AG04450 (cell line): ENCODE measurements at regions of chr11 and their contacts with region 1.

Region 1: GRCh38 chr11:101456812-101457211 is 127.0 kb downstream of the TRPC6 start:
- DNase-seq: no peak
- H3K4me3 ChIP-seq: no peak overlapping the region
- H3K27ac ChIP-seq: no peak overlapping the region
- H3K27me3 ChIP-seq: no peaks in the 10 kb centered on the region
- CTCF ChIP-seq: peak; percentile 46

Region 2: GRCh38 chr11:101436511-101437142 is 20.2 kb before region 1 on chr11:
- CTCF ChIA-PET with region 1: interaction called, 12 read pairs
- POLR2A ChIA-PET with region 1: no interaction called
- DNase-seq: no peak
- H3K4me3 ChIP-seq: no peak overlapping the region
- H3K27ac ChIP-seq: no peak overlapping the region
- H3K27me3 ChIP-seq: no peaks in the 10 kb centered on the region
- CTCF ChIP-seq: peak; percentile 81

Region 3: DNA sequence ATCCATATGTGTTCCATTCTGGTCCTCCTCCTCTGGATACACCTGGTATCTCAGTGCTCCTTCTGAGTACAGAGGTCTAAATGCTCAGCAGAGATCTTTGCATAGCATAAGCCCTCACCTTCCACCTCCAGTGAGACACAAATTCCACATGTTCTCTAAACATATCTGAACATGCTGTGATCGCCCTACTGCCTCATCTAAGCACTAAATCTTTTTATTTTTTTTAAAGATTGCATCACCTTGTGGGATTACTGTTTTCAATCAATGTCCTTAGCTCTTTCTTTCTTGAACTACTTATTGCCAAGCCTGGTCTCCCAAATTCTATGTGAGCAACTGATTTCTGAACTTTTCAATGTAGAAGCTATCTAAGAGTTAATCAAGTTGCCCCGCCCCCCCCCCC is 13.6 kb after region 1 on chr11:
- CTCF ChIA-PET with region 1: interaction called, 15 read pairs
- POLR2A ChIA-PET with region 1: no interaction called
- DNase-seq: no peak
- H3K4me3 ChIP-seq: no peak overlapping the region
- H3K27ac ChIP-seq: peak overlapping the region; percentile 23
- H3K27me3 ChIP-seq: no peaks in the 10 kb centered on the region
- CTCF ChIP-seq: no peak

Region 4: GRCh38 chr11:101759771-101760450 is 303.1 kb after region 1 on chr11:
- CTCF ChIA-PET with region 1: interaction called, 12 read pairs
- POLR2A ChIA-PET with region 1: no interaction called
- DNase-seq: no peak
- H3K4me3 ChIP-seq: no peak overlapping the region
- H3K27ac ChIP-seq: no peak overlapping the region
- H3K27me3 ChIP-seq: no peaks in the 10 kb centered on the region
- CTCF ChIP-seq: peak; percentile 46